A549 (cell line): ENCODE measurements at regions of chr20 and their contacts with region 1.

Region 1: GRCh38 chr20:35238170-35238569 is 11.7 kb downstream of the MMP24 start:
- DNase-seq: no peak
- ATAC-seq: no peak
- H3K4me3 ChIP-seq: no peak overlapping the region
- H3K27ac ChIP-seq: peak overlapping the region in 1 of 2 experiments; percentile 53; a peak in 2 of 6 replicates
- H3K4me1 ChIP-seq: peaks cover 32% of the 10 kb centered on the region
- CTCF ChIP-seq: no peak
- EP300 ChIP-seq: no peak
- POLR2A ChIP-seq: no peak
- RAD21 ChIP-seq: no peak

Region 2: DNA sequence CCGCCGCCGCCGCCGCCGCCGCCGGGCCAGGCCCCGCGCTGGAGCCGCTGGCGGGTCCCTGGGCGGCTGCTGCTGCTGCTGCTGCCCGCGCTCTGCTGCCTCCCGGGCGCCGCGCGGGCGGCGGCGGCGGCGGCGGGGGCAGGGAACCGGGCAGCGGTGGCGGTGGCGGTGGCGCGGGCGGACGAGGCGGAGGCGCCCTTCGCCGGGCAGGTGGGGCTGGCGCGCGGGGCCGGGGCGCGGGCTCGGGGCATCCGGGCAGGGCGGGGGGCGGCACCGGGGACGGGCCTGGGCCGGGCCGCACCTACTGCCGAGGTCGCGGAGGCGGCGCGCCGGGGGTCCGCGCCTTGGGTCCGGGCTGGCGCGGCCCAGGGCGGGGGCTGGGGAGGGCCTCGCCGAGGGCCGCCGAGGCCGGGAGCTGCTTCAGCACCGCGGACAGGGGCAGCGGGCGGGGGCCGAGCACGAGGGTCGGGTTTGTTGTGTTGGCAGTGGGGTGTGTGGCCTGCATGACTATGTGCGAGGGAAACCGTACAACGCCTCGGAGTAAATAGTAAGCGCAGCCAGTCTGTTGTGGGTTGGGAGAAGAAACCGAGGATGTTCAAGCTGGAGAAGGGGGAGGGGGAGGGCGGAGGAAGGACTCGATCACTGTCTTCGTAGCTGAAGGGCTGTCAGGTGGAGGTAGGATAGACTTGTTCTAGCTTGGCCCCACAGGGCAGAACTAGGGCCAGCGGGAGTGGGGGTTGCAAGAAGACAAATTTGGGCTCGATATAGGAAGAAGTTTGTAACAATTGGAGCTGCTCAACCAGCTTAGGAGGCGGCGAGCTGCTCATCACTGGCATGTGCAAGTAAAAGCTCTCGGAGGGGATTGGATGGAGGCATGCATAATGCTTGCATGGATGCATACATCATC is 11.1 kb before region 1 on chr20:
- CTCF ChIA-PET with region 1: interaction called, 17 read pairs
- POLR2A ChIA-PET with region 1: no interaction called
- DNase-seq: peak; percentile 49 to 50
- ATAC-seq: peak; percentile 84 to 92
- H3K4me3 ChIP-seq: peak overlapping the region; percentile 65
- H3K27ac ChIP-seq: peak overlapping the region; percentile 61 to 93; a peak in 5 of 6 replicates
- H3K4me1 ChIP-seq: peaks cover 18% of the 10 kb centered on the region; the same call in 2 of the 3 replicates
- CTCF ChIP-seq: no peak
- EP300 ChIP-seq: no peak
- POLR2A ChIP-seq: no peak
- RAD21 ChIP-seq: 0 out of 5 replicates have a peak, but pooled peaks of 1 of the 2 experiments have one; percentile 15

Region 3: GRCh38 chr20:35312348-35312747 is 74.2 kb after region 1 on chr20:
- CTCF ChIA-PET with region 1: no interaction called
- POLR2A ChIA-PET with region 1: no interaction called
- DNase-seq: peak; percentile 75 to 82
- ATAC-seq: peak; percentile 81 to 86
- H3K4me3 ChIP-seq: no peak overlapping the region
- H3K27ac ChIP-seq: peak overlapping the region; percentile 83 to 95
- H3K4me1 ChIP-seq: peaks cover 74% of the 10 kb centered on the region
- CTCF ChIP-seq: no peak
- EP300 ChIP-seq: peak; percentile 37 to 76; a peak in 2 of 5 replicates
- POLR2A ChIP-seq: no peak
- RAD21 ChIP-seq: peak; percentile 20 to 40; a peak in 3 of 5 replicates

Region 4: GRCh38 chr20:35478804-35479472 is 240.8 kb after region 1 on chr20:
- CTCF ChIA-PET with region 1: no interaction called
- POLR2A ChIA-PET with region 1: no interaction called
- DNase-seq: peak in 1 of 2 experiments; percentile 26
- ATAC-seq: peak; percentile 47; a peak in 4 of 6 replicates
- H3K4me3 ChIP-seq: no peak overlapping the region
- H3K27ac ChIP-seq: no peak overlapping the region
- H3K4me1 ChIP-seq: no peaks in the 10 kb centered on the region
- CTCF ChIP-seq: no peak; the same call in 2 of the 3 replicates
- EP300 ChIP-seq: no peak
- POLR2A ChIP-seq: no peak
- RAD21 ChIP-seq: peak in 1 of 2 experiments; percentile 23; a peak in 1 of 5 replicates